ENCODE measurements at regions of chr1 and their contacts with region 1.

Region 1: DNA sequence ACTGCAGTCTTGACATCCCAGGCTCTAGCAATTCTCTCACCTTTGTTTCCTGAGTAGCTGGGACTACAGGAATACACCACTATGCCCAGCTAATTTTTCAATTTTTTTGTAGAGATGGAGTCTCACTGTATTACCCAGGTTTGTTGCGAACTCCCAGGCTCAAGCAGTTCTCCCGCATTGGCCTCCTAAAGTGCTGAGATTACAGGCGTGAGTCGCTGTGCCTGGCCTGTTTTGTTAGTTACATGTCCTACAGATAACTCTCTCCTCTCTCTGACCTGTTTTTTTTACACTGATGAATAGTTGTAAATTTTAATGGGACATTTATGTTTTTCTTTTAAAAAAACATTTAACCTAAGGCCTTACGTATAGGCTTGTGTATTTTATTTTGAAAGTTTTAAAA is 19.8 kb downstream of the PTBP2 start:
- DNase-seq: no peak
- H3K4me3 ChIP-seq: no peak overlapping the region
- H3K27ac ChIP-seq: no peak overlapping the region
- H3K4me1 ChIP-seq: peaks cover 0 to 2% (median 0%) of the 10 kb centered on the region in 4 experiments; a peak in 1 of 7 replicates
- H3K27me3 ChIP-seq: no peaks in the 10 kb centered on the region
- CTCF ChIP-seq: no peak
- EP300 ChIP-seq: no peak
- POLR2A ChIP-seq: no peak
- RAD21 ChIP-seq: no peak

Region 2: DNA sequence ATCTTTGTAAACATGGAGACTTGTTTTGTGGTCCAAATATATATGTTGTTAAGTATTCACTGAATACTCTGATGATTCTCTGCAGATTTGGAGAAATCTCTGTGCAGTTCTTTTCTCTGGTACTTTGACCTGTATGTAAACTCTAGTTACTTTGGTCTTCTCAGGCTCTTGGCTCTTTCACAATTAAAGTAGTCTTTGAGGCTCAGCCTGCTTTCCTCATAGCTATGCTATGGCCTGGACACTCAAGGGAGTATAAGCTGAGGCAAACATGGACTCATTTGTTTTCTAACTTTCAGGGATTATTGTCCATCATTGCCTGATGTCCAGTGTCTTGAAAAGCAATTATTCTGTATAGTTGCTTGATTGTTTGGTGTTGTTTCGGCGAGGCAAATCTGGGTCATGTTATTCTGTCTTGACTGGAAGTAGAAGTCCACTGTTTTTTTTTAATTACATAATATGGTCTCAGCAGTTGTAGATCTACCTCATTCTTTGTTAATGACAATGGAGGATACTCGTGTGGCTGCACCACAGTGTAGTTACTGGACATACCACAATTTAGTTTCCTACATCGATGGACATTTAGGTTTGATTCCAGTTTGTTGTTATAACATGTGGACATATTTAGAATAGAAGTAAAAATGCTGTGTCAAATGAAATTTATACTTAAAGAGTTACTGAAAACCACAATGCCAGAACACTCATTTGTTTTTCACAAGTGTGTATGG is 10.6 kb before region 1 on chr1:
- CTCF ChIA-PET with region 1: no interaction called
- POLR2A ChIA-PET with region 1: interaction called, 20 read pairs
- DNase-seq: no peak
- H3K4me3 ChIP-seq: no peak overlapping the region
- H3K27ac ChIP-seq: no peak overlapping the region
- H3K4me1 ChIP-seq: peaks cover 0 to 4% (median 0%) of the 10 kb centered on the region in 4 experiments; a peak in 2 of 7 replicates
- H3K27me3 ChIP-seq: no peaks in the 10 kb centered on the region
- CTCF ChIP-seq: no peak
- EP300 ChIP-seq: no peak
- POLR2A ChIP-seq: no peak
- RAD21 ChIP-seq: no peak

Region 3: GRCh38 chr1:96872757-96873156 is 131.4 kb after region 1 on chr1:
- CTCF ChIA-PET with region 1: no interaction called
- POLR2A ChIA-PET with region 1: no interaction called
- DNase-seq: no peak
- H3K4me3 ChIP-seq: no peak overlapping the region
- H3K27ac ChIP-seq: no peak overlapping the region
- H3K4me1 ChIP-seq: no peaks in the 10 kb centered on the region
- H3K27me3 ChIP-seq: no peaks in the 10 kb centered on the region
- CTCF ChIP-seq: peak in 2 of 3 experiments; percentile 41 to 60; a peak in 3 of 4 replicates
- EP300 ChIP-seq: no peak
- POLR2A ChIP-seq: no peak
- RAD21 ChIP-seq: peak; percentile 61 to 68

Measured in H1 (cell line).